AG04450 (cell line): ENCODE measurements at regions of chr11 and their contacts with region 1.

Region 1: DNA sequence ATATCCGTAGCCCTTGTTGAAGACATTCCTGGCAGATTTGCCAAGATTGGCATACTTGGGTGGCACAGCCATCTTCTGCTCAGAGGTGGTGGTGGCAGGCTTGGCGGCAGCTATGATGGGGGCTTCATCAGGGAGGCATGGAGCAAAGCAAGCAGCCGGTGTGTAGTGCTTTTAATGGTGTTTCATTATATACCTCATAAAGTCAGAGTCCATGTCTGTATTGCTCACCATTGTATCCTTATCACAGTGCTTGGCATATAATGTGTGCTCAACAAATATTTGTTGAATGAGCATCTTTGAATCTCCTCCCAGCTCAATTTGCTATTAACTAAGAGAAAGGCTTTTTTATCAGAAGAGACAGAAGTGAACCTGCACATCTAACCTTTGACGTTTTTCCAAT is 7.8 kb upstream of the DNHD1 start:
- DNase-seq: no peak
- H3K4me3 ChIP-seq: no peak overlapping the region
- H3K27ac ChIP-seq: no peak overlapping the region
- H3K27me3 ChIP-seq: no peaks in the 10 kb centered on the region
- CTCF ChIP-seq: no peak

Region 2: GRCh38 chr11:6345366-6345765 is 143.9 kb before region 1 on chr11:
- CTCF ChIA-PET with region 1: no interaction called
- POLR2A ChIA-PET with region 1: interaction called, 11 read pairs
- DNase-seq: no peak
- H3K4me3 ChIP-seq: no peak overlapping the region
- H3K27ac ChIP-seq: no peak overlapping the region
- H3K27me3 ChIP-seq: peaks cover 6% of the 10 kb centered on the region
- CTCF ChIP-seq: no peak

Region 3: GRCh38 chr11:6459099-6459450 is 30.2 kb before region 1 on chr11:
- CTCF ChIA-PET with region 1: no interaction called
- POLR2A ChIA-PET with region 1: no interaction called
- DNase-seq: no peak
- H3K4me3 ChIP-seq: no peak overlapping the region
- H3K27ac ChIP-seq: no peak overlapping the region
- H3K27me3 ChIP-seq: no peaks in the 10 kb centered on the region
- CTCF ChIP-seq: no peak

Region 4: GRCh38 chr11:6505577-6506240 is 16.4 kb after region 1 on chr11:
- CTCF ChIA-PET with region 1: interaction called, 10 read pairs
- POLR2A ChIA-PET with region 1: no interaction called
- DNase-seq: peak; percentile 16
- H3K4me3 ChIP-seq: no peak overlapping the region
- H3K27ac ChIP-seq: no peak overlapping the region
- H3K27me3 ChIP-seq: no peaks in the 10 kb centered on the region
- CTCF ChIP-seq: peak; percentile 60